ENCODE measurements at regions of chr1 and their contacts with region 1.

Region 1: DNA sequence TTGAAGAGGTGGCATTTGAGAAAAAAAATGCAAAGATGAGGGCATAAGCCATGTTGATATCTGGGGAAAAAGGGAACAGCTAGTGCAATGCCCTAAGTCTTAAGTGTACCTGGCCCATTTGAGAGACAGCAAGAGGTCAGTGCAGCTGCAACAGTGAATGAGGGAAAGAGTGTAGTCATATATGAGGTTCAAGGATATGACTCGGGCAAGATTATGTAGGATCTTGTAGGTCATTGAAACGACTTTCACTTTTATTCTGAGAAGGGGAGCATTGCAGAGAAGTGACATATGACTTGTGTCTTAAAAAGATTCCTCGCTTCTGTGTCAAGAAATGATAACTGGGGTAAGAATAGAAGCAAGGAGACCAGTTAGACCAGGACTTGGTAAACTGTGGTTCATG is 31.0 kb downstream of the NTMT2 start:
- DNase-seq: no peak
- H3K4me3 ChIP-seq: no peak overlapping the region
- H3K27ac ChIP-seq: no peak overlapping the region
- H3K4me1 ChIP-seq: no peaks in the 10 kb centered on the region
- H3K27me3 ChIP-seq: no peaks in the 10 kb centered on the region
- CTCF ChIP-seq: no peak
- EP300 ChIP-seq: no peak
- POLR2A ChIP-seq: no peak

Region 2: DNA sequence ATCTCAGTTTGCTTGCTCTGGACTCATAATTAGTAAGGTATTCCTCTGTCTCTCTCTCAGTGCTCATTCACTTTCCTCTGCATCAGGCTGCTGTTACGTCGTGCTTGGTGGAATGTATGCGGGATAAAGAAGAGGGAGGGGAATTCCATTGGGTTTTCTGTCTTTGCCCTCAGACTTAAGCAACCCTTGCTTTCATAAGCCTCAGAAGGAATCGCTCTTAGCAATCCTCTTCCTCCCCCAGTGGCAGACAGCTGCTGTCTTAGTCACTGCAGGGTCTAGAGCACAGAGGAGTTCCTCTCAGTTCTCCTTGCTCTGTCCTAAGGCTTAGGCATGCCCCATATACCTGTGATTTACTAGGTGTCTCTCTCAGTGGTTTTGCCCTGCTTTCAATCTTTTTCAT is 50.1 kb before region 1 on chr1:
- in situ Hi-C with region 1: no loop called
- intact Hi-C with region 1: no loop called
- DNase-seq: no peak
- H3K4me3 ChIP-seq: no peak overlapping the region
- H3K27ac ChIP-seq: no peak overlapping the region
- H3K4me1 ChIP-seq: peaks cover 0 to 4% (median 0%) of the 10 kb centered on the region in 4 donors
- H3K27me3 ChIP-seq: no peaks in the 10 kb centered on the region
- CTCF ChIP-seq: no peak
- EP300 ChIP-seq: no peak
- POLR2A ChIP-seq: no peak

Region 3: DNA sequence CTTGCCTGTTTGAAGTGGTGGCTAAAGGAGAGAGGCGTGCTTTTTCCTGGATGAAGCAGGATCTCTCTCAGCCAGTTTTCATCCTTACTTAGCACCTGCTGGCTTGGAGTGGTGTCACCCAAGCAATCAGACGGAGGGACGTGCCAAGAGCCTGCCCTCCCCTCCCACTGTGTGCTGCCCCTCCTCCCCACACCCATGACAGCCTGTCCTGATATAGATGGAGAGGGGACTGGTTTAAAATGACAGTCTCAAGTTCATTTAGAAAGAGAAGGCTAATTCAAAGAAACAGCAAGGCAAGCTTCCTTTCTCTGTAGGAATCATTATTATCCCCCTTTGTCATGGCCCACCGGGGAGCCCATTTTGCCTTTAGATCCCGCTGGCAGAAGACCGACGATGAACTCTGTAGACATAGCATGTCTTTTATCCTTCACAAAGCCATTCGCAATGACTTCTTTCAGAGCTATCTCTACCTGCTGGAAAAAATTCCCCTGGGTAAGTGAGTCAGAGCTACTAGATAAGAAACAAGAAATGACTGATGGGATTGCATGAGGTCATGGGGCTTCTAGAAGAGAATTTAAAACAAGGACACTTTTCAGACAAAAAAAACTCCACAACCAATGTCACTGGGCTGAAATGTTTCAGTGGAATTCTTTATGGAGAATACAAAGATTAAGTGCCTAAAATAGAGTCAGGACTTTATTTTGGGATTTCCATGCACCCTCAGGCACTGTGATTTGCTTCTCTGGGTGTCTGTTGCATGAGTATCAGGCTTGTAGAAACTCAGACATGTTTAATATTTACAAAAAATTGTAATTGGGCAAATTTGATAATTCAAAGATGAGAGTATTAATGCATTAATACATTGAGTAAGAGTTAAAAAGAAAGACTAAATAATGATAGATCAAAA is 30.7 kb before region 1 on chr1 and contains the start of gene NTMT2:
- in situ Hi-C with region 1: no loop called
- intact Hi-C with region 1: loop called (anchors 1 kb)
- DNase-seq: no peak
- H3K4me3 ChIP-seq: no peak within 1 kb of the TSS
- H3K27ac ChIP-seq: no peak within 1 kb of the TSS
- H3K4me1 ChIP-seq: no peaks in the 10 kb centered on the region
- H3K27me3 ChIP-seq: no peaks in the 10 kb centered on the region
- CTCF ChIP-seq: no peak
- EP300 ChIP-seq: no peak
- POLR2A ChIP-seq: no peak
- total RNA-seq, gene NTMT2: not detected

Measured in transverse colon (tissue), 4 donors.